ENCODE measurements at regions of chr22 and their contacts with region 1.

Region 1: GRCh38 chr22:24768537-24769374 is 5.8 kb downstream of the PIWIL3 start:
- DNase-seq: peak; percentile 72
- H3K4me3 Mint-ChIP-seq: no peak overlapping the region
- H3K27ac Mint-ChIP-seq: no peak overlapping the region
- H3K4me1 Mint-ChIP-seq: no peaks in the 10 kb centered on the region
- H3K27me3 Mint-ChIP-seq: peaks cover 28% of the 10 kb centered on the region
- CTCF ChIP-seq: peak; percentile 81

Region 2: DNA sequence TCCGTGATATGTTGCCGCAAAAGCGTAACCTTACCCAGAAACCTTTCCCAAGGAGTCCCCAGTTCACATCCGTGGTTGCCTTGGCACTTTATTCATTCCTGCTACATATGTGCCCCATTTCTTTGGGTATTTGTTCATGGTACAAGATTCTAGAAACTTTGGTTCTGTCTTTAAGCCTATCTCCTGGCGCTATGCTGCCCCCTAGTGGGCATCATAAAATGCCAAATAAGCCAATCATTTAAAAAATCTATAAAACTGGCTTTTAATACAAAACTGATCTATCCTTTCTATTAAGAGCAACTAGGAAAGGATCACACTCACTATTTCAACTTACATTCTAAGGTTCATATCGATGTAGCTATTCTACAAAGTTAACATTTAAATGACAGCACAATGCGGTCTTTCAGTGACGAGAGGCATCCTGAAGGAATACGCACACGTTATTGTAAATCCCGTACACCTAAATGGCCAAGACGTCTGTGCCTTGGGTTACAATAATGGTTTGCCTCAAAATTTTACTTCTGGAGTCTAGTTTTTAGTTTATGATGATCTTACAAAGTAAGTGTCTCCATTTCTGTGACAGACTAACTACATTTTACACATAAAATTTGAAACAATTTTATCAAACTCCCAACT is 10.5 kb before region 1 on chr22:
- CTCF ChIA-PET with region 1: interaction called, 67 read pairs
- POLR2A ChIA-PET with region 1: no interaction called
- intact Hi-C with region 1: no loop called
- DNase-seq: peak; percentile 71
- H3K4me3 Mint-ChIP-seq: no peak overlapping the region
- H3K27ac Mint-ChIP-seq: no peak overlapping the region
- H3K4me1 Mint-ChIP-seq: no peaks in the 10 kb centered on the region
- H3K27me3 Mint-ChIP-seq: peaks cover 53% of the 10 kb centered on the region
- CTCF ChIP-seq: peak; percentile 57

Region 3: DNA sequence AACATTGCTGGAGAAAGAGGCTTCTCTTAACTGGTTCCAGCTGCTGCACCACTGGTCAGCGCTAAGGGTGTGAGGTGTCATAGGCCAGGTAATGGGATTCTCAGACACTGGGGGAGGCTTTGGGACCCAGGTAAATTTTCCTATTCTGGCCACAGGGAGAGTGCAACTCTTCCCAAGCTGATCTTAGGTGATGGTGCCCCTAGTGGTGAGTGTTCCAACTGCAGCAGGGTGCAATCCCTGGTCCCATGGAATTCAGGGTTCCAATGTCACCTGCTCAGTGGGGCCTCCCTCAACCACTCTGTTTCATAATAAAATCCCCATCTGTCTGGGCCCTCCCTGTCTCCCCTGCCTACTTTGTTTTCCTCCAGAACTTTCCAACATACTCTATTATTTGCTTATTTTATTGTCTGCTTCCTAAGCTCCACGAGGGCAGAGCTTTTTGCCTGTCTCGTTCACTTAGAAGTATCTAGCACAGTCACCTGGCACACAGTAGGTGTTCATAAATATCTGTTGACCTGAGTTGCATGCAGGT is 34.3 kb after region 1 on chr22:
- CTCF ChIA-PET with region 1: interaction called, 10 read pairs
- POLR2A ChIA-PET with region 1: no interaction called
- intact Hi-C with region 1: no loop called
- DNase-seq: peak; percentile 54
- H3K4me3 Mint-ChIP-seq: no peak overlapping the region
- H3K27ac Mint-ChIP-seq: no peak overlapping the region
- H3K4me1 Mint-ChIP-seq: no peaks in the 10 kb centered on the region
- H3K27me3 Mint-ChIP-seq: peaks cover 28% of the 10 kb centered on the region
- CTCF ChIP-seq: peak; percentile 81

Region 4: DNA sequence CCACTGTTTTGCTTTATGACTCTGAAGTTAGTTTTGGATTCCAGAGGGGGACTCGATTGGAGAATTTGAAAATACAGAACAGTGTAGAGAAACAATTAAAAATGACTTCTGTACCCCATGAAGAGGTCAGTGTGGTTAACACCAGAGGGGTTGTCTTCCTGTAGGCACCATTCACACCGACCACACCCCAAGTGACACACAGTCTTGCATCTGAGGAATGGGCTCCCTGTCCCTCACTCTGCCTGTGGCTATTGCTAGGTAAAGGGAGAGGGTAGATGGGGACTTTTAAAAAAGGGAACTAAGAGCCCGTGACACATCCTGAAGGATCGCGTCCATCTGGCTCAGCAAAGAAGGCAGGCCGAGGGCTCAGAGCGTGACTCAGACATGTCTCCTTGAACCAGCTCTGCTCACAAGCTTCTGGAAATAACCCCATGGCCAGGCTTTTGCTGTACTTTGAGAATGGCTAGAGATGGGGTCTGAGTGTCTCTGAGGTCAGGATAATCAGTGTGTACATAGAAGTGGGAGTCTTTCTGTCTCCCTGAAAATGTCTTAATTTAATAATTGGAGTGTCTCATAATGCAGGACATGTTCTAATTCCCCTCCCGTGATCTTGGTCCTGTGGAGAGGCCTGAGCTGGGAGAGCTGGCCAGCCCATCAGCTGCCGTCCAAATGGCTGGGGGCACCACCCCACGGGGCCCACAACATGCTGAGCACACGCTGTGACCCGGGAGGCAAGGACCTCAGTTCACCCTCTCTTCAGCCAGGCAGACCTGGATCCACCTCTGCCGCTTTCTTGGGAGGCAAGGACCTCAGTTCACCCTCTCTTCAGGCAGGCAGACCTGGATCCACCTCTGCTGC is 76.5 kb after region 1 on chr22:
- CTCF ChIA-PET with region 1: interaction called, 112 read pairs
- POLR2A ChIA-PET with region 1: interaction called, 4 read pairs
- intact Hi-C with region 1: loop called (anchors 1 kb)
- DNase-seq: no peak
- H3K4me3 Mint-ChIP-seq: no peak overlapping the region
- H3K27ac Mint-ChIP-seq: no peak overlapping the region
- H3K4me1 Mint-ChIP-seq: no peaks in the 10 kb centered on the region
- H3K27me3 Mint-ChIP-seq: peaks cover 86% of the 10 kb centered on the region
- CTCF ChIP-seq: no peak

Region 5: DNA sequence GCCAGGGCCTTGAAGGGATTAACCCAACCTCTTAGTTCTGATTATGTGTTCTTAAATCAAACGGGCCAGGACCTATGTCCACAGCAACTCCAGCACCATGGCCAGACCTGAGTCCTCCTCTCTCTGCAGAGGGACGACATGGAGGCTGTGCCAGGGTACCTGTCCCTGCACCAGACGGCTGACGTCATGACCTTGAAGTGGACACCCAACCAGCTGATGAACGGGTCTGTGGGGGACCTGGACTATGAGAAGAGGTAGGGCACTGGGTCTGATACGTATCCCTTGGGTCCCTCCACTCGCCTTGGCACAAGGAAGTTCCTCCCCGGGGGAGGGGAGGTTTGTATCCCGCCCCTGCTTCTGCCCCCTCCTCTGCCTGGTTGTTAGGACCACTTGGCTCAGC is 90.8 kb after region 1 on chr22:
- CTCF ChIA-PET with region 1: no interaction called
- POLR2A ChIA-PET with region 1: no interaction called
- intact Hi-C with region 1: no loop called
- DNase-seq: no peak
- H3K4me3 Mint-ChIP-seq: no peak overlapping the region
- H3K27ac Mint-ChIP-seq: no peak overlapping the region
- H3K4me1 Mint-ChIP-seq: no peaks in the 10 kb centered on the region
- H3K27me3 Mint-ChIP-seq: peaks cover 68% of the 10 kb centered on the region
- CTCF ChIP-seq: no peak

Region 6: GRCh38 chr22:24925586-24926427 is 157.1 kb after region 1 on chr22:
- CTCF ChIA-PET with region 1: no interaction called
- POLR2A ChIA-PET with region 1: no interaction called
- intact Hi-C with region 1: no loop called
- DNase-seq: no peak
- H3K4me3 Mint-ChIP-seq: no peak overlapping the region
- H3K27ac Mint-ChIP-seq: no peak overlapping the region
- H3K4me1 Mint-ChIP-seq: peaks cover 6% of the 10 kb centered on the region
- H3K27me3 Mint-ChIP-seq: peaks cover 21% of the 10 kb centered on the region
- CTCF ChIP-seq: no peak

Region 7: DNA sequence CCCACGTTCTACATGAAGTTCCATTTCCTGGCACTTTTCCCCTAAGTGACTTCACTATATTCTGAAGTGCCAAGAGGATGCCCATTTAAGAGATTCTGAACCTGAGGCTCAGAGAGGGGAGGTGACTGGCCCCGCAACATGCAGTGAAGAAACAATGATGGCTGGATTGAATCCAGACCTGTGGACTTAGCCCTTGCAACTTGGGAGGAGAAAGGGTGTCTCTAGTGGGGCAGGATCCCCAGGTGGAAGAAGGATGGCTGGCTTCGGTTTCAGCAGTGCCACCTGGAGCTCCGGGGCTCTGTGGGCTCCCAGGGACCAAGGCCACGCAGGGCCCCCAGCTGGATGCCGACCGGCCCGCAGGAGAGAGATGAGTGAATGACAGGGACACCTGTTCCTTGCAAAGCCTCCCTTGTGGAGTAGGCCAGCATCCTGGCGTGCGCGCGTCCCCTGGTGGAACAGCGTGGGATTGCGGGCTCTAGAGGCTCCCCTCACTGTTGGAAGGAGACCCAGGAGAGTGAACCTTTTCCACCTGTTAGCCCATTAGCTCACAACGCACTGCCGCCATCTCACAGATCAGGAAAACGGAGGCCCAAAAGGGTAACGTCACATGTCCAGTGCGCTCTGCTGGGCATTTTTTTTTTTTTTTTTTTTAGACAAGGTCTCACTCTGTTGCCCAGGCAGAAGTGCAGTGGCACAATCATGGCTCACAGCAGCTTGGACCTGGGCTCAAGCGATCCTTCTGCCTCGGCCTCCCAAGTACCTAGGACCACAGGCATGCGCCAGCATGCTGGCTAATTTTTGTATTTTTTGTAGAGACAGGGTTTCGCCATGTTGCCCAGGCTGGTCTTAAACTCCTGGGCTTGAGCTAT is 288.5 kb after region 1 on chr22:
- CTCF ChIA-PET with region 1: interaction called, 5 read pairs
- POLR2A ChIA-PET with region 1: interaction called, 3 read pairs
- intact Hi-C with region 1: loop called (anchors 5 kb)
- DNase-seq: peak; percentile 65
- H3K4me3 Mint-ChIP-seq: no peak overlapping the region
- H3K27ac Mint-ChIP-seq: no peak overlapping the region
- H3K4me1 Mint-ChIP-seq: peaks cover 8% of the 10 kb centered on the region
- H3K27me3 Mint-ChIP-seq: no peaks in the 10 kb centered on the region
- CTCF ChIP-seq: peak; percentile 82

Measured in MCF 10A (cell line).